MCF 10A (cell line): ENCODE measurements at regions of chr22 and their contacts with region 1.

Region 1: DNA sequence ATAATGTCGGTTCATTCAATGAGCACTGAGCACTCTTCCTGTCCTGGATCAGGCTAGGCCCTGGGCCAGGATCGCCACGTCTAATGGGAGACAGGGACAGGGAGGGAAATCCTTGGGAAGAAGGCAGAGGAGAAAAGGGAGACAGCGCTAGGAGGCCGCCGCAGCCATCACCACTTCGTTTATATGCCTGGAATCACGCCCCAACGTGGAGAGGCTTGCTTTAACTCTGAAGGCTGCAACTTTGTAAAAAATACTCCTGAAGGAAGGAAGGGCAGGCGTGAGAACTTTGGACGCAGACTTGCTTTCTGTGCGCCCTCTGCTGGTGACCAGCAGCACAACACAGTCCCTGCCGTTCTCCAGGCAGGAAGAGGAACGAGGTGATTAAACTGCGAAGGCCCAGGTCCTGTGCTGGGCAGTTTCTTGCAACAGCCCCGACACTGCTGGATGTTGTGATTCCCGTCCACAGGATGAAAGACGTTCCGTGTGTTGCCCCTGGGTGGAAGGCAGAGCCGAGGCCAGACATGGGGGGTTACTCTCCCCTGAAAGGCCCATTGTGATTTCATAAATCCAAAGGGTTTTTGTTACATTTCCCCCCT is 22.1 kb downstream of the RIBC2 start:
- DNase-seq: peak; percentile 85
- H3K4me3 Mint-ChIP-seq: no peak overlapping the region
- H3K27ac Mint-ChIP-seq: peak overlapping the region; percentile 39
- H3K4me1 Mint-ChIP-seq: peaks cover 11% of the 10 kb centered on the region
- H3K27me3 Mint-ChIP-seq: no peaks in the 10 kb centered on the region
- CTCF ChIP-seq: peak; percentile 92

Region 2: GRCh38 chr22:45101515-45102227 is 334.0 kb before region 1 on chr22:
- CTCF ChIA-PET with region 1: no interaction called
- POLR2A ChIA-PET with region 1: no interaction called
- intact Hi-C with region 1: loop called (anchors 1 kb)
- DNase-seq: peak; percentile 83
- H3K4me3 Mint-ChIP-seq: no peak overlapping the region
- H3K27ac Mint-ChIP-seq: no peak overlapping the region
- H3K4me1 Mint-ChIP-seq: peaks cover 10% of the 10 kb centered on the region
- H3K27me3 Mint-ChIP-seq: peaks cover 16% of the 10 kb centered on the region
- CTCF ChIP-seq: peak; percentile 51

Region 3: DNA sequence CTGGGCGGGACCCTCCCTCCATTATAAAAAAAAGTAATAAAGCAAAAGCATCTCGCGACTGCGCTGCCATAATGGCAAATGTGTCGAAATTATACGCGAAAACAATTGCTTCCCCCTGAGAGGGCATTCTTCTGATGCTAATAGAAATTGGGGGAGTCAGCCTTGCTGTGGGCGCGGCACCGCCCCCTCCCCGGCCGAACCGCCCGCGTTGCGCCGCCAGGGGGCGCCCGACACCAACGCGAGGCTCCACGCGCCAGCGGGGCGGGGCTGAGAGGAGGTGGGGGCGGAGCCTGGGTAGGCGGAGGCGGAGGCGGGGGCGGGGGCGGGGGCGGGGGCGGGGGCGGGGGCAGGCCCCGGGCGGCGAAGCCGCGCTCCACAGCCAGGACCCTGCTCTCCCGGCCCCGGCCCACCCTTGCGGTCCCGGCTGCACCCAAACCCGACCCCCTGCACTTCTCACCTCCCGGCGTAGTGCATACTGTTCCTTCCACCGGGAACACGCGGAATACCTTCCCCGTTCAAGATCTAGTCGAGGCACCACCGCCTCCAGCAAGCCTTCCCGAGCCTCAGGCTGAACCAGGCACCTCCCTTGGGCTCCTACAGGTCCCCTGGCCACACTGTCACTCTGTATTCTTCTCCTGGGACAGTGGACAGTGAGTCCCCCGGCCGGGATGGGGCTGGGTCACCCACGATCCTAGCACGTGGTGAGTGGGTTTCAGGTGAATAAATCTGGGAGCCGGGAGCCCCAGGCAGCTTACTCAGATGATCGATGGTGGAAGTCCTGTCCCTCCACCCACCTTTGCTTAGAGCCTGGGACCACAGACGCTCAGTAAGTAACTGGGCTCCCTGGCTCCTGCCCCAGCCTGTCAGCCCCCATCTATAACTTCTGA is 166.4 kb before region 1 on chr22:
- CTCF ChIA-PET with region 1: interaction called, 10 read pairs
- POLR2A ChIA-PET with region 1: interaction called, 3 read pairs
- intact Hi-C with region 1: loop called (anchors 1 kb)
- DNase-seq: peak; percentile 67
- H3K4me3 Mint-ChIP-seq: peak overlapping the region; percentile 74
- H3K27ac Mint-ChIP-seq: no peak overlapping the region
- H3K4me1 Mint-ChIP-seq: no peaks in the 10 kb centered on the region
- H3K27me3 Mint-ChIP-seq: no peaks in the 10 kb centered on the region
- CTCF ChIP-seq: peak; percentile 98